Activated CD4-positive, alpha-beta memory T cell treated with anti-CD3 and anti-CD28 coated beads for 36 hours (primary cell): ENCODE measurements at regions of chr6 and their contacts with region 1.

Region 1: GRCh38 chr6:129908858-129909257 is 47.7 kb upstream of the TMEM244 start:
- DNase-seq: no peak
- H3K4me3 Mint-ChIP-seq: no peak overlapping the region
- H3K27ac Mint-ChIP-seq: no peak overlapping the region
- H3K4me1 Mint-ChIP-seq: peaks cover 9% of the 10 kb centered on the region
- H3K27me3 Mint-ChIP-seq: no peaks in the 10 kb centered on the region

Region 2: GRCh38 chr6:130027948-130028347 is 119.1 kb after region 1 on chr6:
- CTCF ChIA-PET with region 1: no interaction called
- POLR2A ChIA-PET with region 1: no interaction called
- intact Hi-C with region 1: loop called (anchors 5 kb)
- DNase-seq: no peak
- H3K4me3 Mint-ChIP-seq: no peak overlapping the region
- H3K27ac Mint-ChIP-seq: peak overlapping the region; percentile 70
- H3K4me1 Mint-ChIP-seq: peaks cover 53% of the 10 kb centered on the region
- H3K27me3 Mint-ChIP-seq: no peaks in the 10 kb centered on the region